ENCODE measurements at regions of chr10 and their contacts with region 1.

Region 1: GRCh38 chr10:5446390-5446926 is 34.1 kb downstream of the NET1 start:
- DNase-seq: peak; percentile 87 to 94 (median 93)
- H3K4me3 ChIP-seq: peak overlapping the region in 6 of 7 experiments; percentile 53 to 97 (median 86)
- H3K27ac ChIP-seq: peak overlapping the region; percentile 48 to 85
- H3K4me1 ChIP-seq: peaks cover 5 to 32% (median 20%) of the 10 kb centered on the region in 4 experiments
- H3K27me3 ChIP-seq: no peaks in the 10 kb centered on the region

Region 2: GRCh38 chr10:5434017-5434753 is 12.3 kb before region 1 on chr10:
- CTCF ChIA-PET with region 1: interaction called, 13 read pairs
- POLR2A ChIA-PET with region 1: no interaction called
- DNase-seq: peak; percentile 50 to 67 (median 61)
- H3K4me3 ChIP-seq: no peak overlapping the region
- H3K27ac ChIP-seq: no peak overlapping the region
- H3K4me1 ChIP-seq: peaks cover 0 to 2% (median 0%) of the 10 kb centered on the region in 4 experiments
- H3K27me3 ChIP-seq: no peaks in the 10 kb centered on the region

Region 3: GRCh38 chr10:5623081-5623748 is 176.8 kb after region 1 on chr10:
- CTCF ChIA-PET with region 1: interaction called, 185 read pairs
- POLR2A ChIA-PET with region 1: interaction called, 3 read pairs
- DNase-seq: peak; percentile 74 to 82 (median 81)
- H3K4me3 ChIP-seq: peak overlapping the region in 1 of 7 experiments; percentile 25
- H3K27ac ChIP-seq: no peak overlapping the region
- H3K4me1 ChIP-seq: peaks cover 0 to 5% (median under 1%) of the 10 kb centered on the region in 4 experiments
- H3K27me3 ChIP-seq: no peaks in the 10 kb centered on the region

Region 4: GRCh38 chr10:5629303-5630111 is 183.0 kb after region 1 on chr10:
- CTCF ChIA-PET with region 1: interaction called, 185 read pairs
- POLR2A ChIA-PET with region 1: no interaction called
- DNase-seq: peak; percentile 83 to 91 (median 86)
- H3K4me3 ChIP-seq: peak overlapping the region in 4 of 7 experiments; percentile 8 to 62 (median 48)
- H3K27ac ChIP-seq: no peak overlapping the region
- H3K4me1 ChIP-seq: peaks cover 0 to 17% (median 13%) of the 10 kb centered on the region in 4 experiments
- H3K27me3 ChIP-seq: no peaks in the 10 kb centered on the region

Measured in common myeloid progenitor, CD34-positive (primary cell).